Activated T-helper 1 cell treated with anti-CD3 and anti-CD28 coated beads, Interleukin-12 subunit alpha, Interleukin-12 subunit beta, Interleukin-2, Interleukin-4 antibody, amounts not matched to agents 30 ng/mL and 10 ng/mL and 1 ng/mL, durations not matched to agents 14 hours and 24 hours and 36 hours (primary cell): ENCODE measurements at regions of chr21 and their contacts with region 1.

Region 1: DNA sequence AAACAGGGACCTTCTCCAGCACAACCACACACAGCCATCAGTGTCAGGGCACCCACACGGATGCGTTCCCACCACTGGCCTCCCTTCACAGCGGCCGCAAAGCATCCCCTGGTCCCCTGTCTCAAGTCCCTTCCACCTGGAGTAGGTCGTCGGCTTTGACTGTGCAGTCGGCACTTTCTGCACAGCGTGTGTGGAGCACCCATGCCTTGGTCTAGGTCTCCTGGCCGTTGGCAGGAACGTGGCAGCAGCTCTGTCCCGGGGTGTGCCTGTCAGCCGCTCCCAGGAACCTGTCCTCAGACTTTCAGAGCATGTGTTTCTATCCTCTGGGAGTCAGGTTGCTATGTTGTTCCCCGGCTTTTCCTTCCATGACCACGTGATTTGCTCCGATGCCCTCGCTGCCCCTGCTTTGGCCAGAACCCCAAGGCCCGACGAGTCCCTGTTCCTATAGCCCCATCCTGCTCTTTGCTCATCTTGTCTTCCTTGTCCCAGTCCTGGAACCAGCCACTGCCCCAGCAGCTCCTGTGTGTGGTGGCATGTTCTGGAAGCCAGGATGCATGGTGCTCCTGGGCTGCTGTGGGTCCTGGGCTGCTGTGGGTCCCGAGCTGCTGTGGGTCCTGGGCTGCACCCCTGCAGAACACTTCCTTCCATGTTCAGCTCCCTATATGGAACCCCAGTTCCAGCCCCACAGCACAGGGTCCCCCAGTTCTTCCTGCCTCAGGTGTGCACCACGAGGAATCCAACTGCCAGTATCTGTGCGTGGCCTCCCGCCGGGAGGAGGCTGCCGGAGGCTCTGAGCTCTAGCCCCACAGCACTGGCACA is 84.2 kb upstream of the COL6A1 start:
- DNase-seq: no peak
- H3K4me3 Mint-ChIP-seq: no peak overlapping the region
- H3K27ac Mint-ChIP-seq: no peak overlapping the region
- H3K4me1 Mint-ChIP-seq: no peaks in the 10 kb centered on the region
- H3K27me3 Mint-ChIP-seq: no peaks in the 10 kb centered on the region

Region 2: DNA sequence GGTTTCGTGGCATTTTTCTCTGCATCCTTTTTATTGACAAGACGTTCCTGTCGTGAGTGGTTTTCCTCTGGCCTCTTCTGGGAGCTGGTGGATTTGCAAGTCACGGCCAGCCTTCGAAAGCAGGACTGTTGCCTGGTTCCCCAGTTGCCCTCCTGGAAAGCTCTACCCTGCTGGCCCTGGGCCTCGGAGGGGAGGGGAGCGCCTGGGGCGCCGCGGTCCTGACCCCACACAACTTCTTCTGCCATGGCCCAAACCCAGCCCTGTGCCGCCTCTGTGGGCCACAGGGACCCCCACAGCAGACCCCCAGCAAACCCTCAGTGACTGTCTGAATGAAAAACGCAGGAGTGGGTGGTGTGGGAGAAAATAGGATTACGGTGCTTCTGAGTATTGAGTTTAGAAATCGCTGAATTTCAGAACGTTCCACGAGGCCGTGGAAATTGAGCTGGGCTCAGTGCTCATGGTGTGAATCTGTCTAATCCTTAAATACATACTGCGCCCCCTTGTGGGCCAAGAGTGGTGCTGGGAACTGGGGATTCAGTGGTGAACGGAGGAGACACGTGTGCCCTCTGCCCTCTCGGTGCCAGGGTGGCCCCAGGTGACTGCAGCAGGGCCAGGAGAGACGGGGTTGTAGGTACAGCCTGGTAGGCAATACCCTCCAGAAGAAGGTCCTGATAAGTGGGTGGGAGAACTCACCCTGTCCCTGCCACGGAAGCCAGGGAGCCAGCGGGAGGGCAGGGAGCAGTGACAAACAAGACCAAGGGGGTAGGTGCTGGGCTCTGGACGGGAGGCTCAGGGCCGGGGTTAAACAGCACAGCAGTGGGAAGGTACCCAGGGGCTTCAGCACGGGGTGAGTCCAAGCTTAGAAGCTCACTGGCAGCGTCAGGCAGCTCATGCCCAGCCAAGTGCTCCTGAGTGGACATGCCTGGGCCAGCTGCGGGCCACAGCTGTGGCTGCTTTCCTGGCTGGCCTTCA is 17.0 kb before region 1 on chr21:
- intact Hi-C with region 1: loop called (anchors 2 kb)
- DNase-seq: peak; percentile 51
- H3K4me3 Mint-ChIP-seq: no peak overlapping the region
- H3K27ac Mint-ChIP-seq: no peak overlapping the region
- H3K4me1 Mint-ChIP-seq: peaks cover 18% of the 10 kb centered on the region
- H3K27me3 Mint-ChIP-seq: peaks cover 12% of the 10 kb centered on the region

Region 3: DNA sequence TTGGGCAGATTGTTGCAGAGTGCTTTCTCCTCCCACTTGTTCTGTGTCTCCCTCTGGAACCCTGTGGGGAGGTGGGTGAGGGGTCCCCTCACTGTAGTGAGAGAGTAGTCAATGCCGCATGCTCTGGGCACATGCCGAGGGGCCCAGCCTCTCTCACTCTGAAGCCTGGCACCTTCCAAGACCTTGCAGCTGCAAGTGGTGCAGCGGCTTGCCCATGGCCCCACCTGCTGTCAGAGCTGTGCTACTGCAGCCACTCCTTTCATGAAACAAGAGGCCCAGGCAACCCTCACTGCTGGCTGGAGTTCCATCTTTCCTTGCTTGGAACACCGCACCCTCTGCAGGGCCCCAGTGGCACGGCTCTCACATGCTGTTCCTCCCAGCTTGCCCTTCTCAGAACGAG is 25.7 kb after region 1 on chr21:
- intact Hi-C with region 1: no loop called
- DNase-seq: no peak
- H3K4me3 Mint-ChIP-seq: no peak overlapping the region
- H3K27ac Mint-ChIP-seq: no peak overlapping the region
- H3K4me1 Mint-ChIP-seq: no peaks in the 10 kb centered on the region
- H3K27me3 Mint-ChIP-seq: peaks cover 1% of the 10 kb centered on the region

Region 4: DNA sequence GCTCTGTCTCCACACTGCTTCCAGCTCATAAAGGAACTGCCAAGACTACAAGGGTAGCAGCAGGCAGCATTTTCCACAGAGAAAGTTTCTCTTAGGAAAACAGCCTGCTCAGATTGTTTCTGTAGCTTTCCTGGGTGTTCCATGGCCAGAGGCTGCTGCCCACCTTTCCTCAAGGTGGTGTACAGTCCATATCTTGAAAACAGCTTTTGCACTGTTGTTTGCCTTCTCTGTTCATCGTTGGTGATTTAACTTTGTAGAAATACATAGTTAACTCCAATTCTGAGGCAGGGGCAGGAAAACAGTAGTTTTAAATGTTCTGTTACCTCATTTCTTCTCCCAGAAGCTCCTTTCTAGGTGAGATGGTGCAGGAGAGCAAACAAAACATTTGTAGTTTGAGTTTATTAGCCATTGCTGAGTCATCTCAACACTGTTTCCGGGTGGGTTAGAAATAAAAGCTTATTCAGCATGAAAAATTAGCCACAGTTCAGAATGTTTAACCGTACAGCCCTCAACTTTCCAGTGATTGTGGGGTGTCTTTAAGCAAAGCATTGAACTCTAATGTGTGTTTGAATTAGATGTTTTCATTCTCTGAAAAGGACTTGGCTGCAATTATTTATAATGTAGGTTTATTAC is 602.9 kb after region 1 on chr21:
- intact Hi-C with region 1: no loop called
- DNase-seq: no peak
- H3K4me3 Mint-ChIP-seq: no peak overlapping the region
- H3K27ac Mint-ChIP-seq: peak overlapping the region; percentile 49
- H3K4me1 Mint-ChIP-seq: peaks cover 24% of the 10 kb centered on the region
- H3K27me3 Mint-ChIP-seq: no peaks in the 10 kb centered on the region